ENCODE measurements at regions of chr22 and their contacts with region 1.

Region 1: GRCh38 chr22:11066458-11067285 is 4461.3 kb upstream of the OR11H1 start:
- DNase-seq: peak in 1 of 35 experiments; percentile 17
- ATAC-seq: peak in 2 of 4 experiments; percentile 27 to 32
- H3K4me3 ChIP-seq: no peak overlapping the region
- H3K4me3 Mint-ChIP-seq: no peak overlapping the region
- H3K27ac ChIP-seq: no peak overlapping the region
- H3K27ac Mint-ChIP-seq: no peak overlapping the region
- H3K4me1 ChIP-seq: no peaks in the 10 kb centered on the region
- H3K4me1 Mint-ChIP-seq: no peaks in the 10 kb centered on the region
- H3K27me3 ChIP-seq: no peaks in the 10 kb centered on the region
- H3K27me3 Mint-ChIP-seq: no peaks in the 10 kb centered on the region

Region 2: GRCh38 chr22:10781571-10782403 is 284.9 kb before region 1 on chr22:
- CTCF ChIA-PET with region 1: no interaction called
- POLR2A ChIA-PET with region 1: interaction called in 1 of 2 experiments, 10 read pairs
- DNase-seq: no peak
- ATAC-seq: no peak
- H3K4me3 ChIP-seq: peak overlapping the region in 1 of 2 donors; percentile 18
- H3K4me3 Mint-ChIP-seq: no peak overlapping the region
- H3K27ac ChIP-seq: no peak overlapping the region
- H3K27ac Mint-ChIP-seq: no peak overlapping the region
- H3K4me1 ChIP-seq: no peaks in the 10 kb centered on the region
- H3K4me1 Mint-ChIP-seq: no peaks in the 10 kb centered on the region
- H3K27me3 ChIP-seq: no peaks in the 10 kb centered on the region
- H3K27me3 Mint-ChIP-seq: no peaks in the 10 kb centered on the region

Region 3: DNA sequence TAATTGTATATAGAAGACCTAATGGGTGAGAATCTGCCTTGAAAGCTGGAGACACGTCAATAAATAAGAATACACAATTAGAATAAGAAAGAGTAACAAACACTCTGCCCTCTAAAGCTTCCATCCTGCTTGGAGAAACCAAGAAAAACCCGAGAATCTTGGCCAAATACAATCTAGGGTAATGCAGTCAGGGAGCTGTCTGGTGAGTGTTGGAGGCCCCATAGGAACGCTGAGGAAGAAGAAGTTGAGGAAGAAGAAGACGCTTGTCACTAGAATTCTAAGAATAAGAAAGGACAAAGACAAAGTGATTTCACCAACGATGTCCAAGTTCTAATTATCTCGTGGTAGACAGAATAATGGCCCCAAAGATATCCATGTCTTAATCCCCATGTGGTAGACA is 24.6 kb before region 1 on chr22:
- CTCF ChIA-PET with region 1: no interaction called
- POLR2A ChIA-PET with region 1: no interaction called
- DNase-seq: no peak
- ATAC-seq: no peak
- H3K4me3 ChIP-seq: no peak overlapping the region
- H3K4me3 Mint-ChIP-seq: no peak overlapping the region
- H3K27ac ChIP-seq: no peak overlapping the region
- H3K27ac Mint-ChIP-seq: no peak overlapping the region
- H3K4me1 ChIP-seq: no peaks in the 10 kb centered on the region
- H3K4me1 Mint-ChIP-seq: no peaks in the 10 kb centered on the region
- H3K27me3 ChIP-seq: no peaks in the 10 kb centered on the region
- H3K27me3 Mint-ChIP-seq: no peaks in the 10 kb centered on the region

Region 4: GRCh38 chr22:11598473-11599440 is 532.1 kb after region 1 on chr22:
- CTCF ChIA-PET with region 1: no interaction called
- POLR2A ChIA-PET with region 1: no interaction called
- DNase-seq: no peak
- ATAC-seq: no peak
- H3K4me3 ChIP-seq: no peak overlapping the region
- H3K4me3 Mint-ChIP-seq: no peak overlapping the region
- H3K27ac ChIP-seq: no peak overlapping the region
- H3K27ac Mint-ChIP-seq: no peak overlapping the region
- H3K4me1 ChIP-seq: no peaks in the 10 kb centered on the region
- H3K4me1 Mint-ChIP-seq: no peaks in the 10 kb centered on the region
- H3K27me3 ChIP-seq: peaks cover 0 to 4% of the 10 kb centered on the region in 2 experiments
- H3K27me3 Mint-ChIP-seq: no peaks in the 10 kb centered on the region

Measured in T-cell (primary cell).